ENCODE measurements at regions of chr5 and their contacts with region 1.

Region 1: DNA sequence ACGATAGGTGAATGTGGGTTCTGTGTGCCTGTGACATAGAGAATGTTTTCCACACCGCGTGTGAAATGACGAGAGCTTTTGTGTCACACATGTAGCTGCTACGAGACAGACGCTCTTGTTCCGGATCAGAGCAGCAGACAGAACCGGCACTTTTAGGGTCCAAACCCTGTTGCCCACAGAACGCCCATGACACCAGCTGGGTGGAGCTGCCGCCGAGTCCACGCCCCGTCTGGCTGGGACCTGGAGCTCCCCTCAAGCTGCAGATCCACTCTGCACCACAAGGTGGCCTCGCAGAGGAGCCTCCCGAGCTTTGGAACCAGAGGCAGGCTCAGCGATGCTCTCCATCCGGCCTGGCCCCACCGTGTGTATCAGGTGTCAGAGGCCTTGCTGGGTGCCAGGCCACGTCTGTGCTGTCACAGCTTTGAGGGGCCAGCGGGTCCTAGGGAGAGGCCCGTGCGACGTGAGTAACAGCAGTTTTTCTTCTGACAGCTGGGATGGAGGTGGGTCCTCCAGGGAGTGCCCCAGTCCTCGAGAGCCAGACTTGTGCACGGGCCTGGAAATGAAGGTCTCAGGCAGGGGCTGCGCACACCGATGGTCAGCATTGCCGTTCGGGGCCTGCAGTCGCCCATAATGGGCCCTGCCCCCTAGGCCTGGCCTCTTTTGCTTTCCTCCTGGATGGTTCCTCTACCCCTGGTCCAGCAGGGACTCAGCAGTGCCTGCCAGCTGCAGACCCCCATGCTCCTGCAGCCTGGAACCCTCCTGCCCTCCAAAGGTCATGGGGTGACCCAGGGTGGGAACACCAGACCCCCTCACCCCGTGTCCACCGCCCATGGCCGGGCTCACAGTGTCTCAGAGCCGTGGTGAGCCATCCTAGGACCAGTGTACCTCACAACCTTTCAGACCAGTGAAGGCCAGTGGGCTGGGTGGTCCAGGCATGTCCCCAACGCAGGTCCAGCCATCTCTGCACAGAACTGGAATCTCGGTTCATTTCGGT is 2.5 kb upstream of the LRRC14B start:
- DNase-seq: peak; percentile 80
- ATAC-seq: peak; percentile 99
- H3K4me3 Mint-ChIP-seq: no peak overlapping the region
- H3K27ac Mint-ChIP-seq: peak overlapping the region; percentile 12
- H3K4me1 Mint-ChIP-seq: peaks cover 11% of the 10 kb centered on the region
- H3K27me3 Mint-ChIP-seq: peaks cover 11% of the 10 kb centered on the region
- CTCF ChIP-seq: peak; percentile 65

Region 2: GRCh38 chr5:217860-218456 is 29.2 kb after region 1 on chr5 and contains the starts of genes CCDC127 and SDHA:
- CTCF ChIA-PET with region 1: interaction called, 13 read pairs
- POLR2A ChIA-PET with region 1: interaction called, 4 read pairs
- intact Hi-C with region 1: loop called (anchors 1 kb)
- DNase-seq: peak; percentile 99
- ATAC-seq: peak; percentile 81
- H3K4me3 Mint-ChIP-seq: peak within 1 kb of the TSS; percentile 91
- H3K27ac Mint-ChIP-seq: peak within 1 kb of the TSS; percentile 85
- H3K4me1 Mint-ChIP-seq: peaks cover 65% of the 10 kb centered on the region
- H3K27me3 Mint-ChIP-seq: no peaks in the 10 kb centered on the region
- CTCF ChIP-seq: no peak
- total RNA-seq, gene CCDC127: 5.7 and 6.4 TPM in 2 replicates
- total RNA-seq, gene SDHA: 90.5 and 95.7 TPM in 2 replicates

Region 3: GRCh38 chr5:424301-425110 is 235.7 kb after region 1 on chr5:
- CTCF ChIA-PET with region 1: interaction called, 12 read pairs
- POLR2A ChIA-PET with region 1: no interaction called
- intact Hi-C with region 1: no loop called
- DNase-seq: peak; percentile 17
- ATAC-seq: peak; percentile 80
- H3K4me3 Mint-ChIP-seq: no peak overlapping the region
- H3K27ac Mint-ChIP-seq: peak overlapping the region; percentile 37
- H3K4me1 Mint-ChIP-seq: peaks cover 16% of the 10 kb centered on the region
- H3K27me3 Mint-ChIP-seq: peaks cover 3% of the 10 kb centered on the region
- CTCF ChIP-seq: no peak

Region 4: GRCh38 chr5:458547-459353 is 270.0 kb after region 1 on chr5:
- CTCF ChIA-PET with region 1: no interaction called
- POLR2A ChIA-PET with region 1: no interaction called
- intact Hi-C with region 1: no loop called
- DNase-seq: no peak
- ATAC-seq: peak; percentile 64
- H3K4me3 Mint-ChIP-seq: no peak overlapping the region
- H3K27ac Mint-ChIP-seq: peak overlapping the region; percentile 62
- H3K4me1 Mint-ChIP-seq: peaks cover 20% of the 10 kb centered on the region
- H3K27me3 Mint-ChIP-seq: no peaks in the 10 kb centered on the region
- CTCF ChIP-seq: no peak

Region 5: DNA sequence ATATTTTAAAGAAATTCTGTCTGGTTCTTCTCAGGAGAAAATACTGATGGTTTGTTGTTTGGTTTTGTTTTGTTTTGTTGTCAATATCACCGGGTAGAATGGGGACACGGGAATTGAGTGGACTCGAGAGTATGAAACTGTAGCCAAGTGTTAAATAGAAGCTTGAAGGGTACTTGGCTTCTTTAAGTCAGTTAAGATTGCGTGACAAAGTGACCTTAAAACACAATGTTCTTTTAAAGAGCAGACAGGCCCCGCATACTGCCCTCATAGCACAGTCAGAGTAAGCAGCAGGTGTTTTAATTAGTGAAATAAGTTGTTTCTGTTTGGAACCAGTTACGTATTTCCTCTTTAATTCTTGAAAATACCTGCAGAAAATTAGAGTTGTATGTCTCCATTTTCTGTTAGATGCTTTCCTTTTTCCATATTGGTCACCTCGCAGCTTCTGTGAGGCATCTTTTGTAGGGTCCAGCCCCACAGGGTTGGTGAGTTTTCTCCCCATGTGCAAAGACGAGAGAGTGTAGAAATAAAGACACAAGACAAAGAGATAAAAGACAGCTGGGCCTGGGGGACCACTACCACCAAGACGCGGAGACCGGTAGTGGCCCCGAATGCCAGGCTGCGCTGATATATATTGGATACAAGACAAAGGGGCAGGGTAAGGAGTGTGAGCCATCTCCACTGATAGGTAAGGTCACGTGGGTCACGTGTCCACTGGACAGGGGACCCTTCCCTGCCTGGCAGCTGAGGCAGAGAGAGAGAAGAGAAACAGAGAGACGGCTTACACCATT is 713.5 kb after region 1 on chr5:
- CTCF ChIA-PET with region 1: interaction called, 13 read pairs
- POLR2A ChIA-PET with region 1: no interaction called
- intact Hi-C with region 1: loop called (anchors 2 kb)
- DNase-seq: no peak
- ATAC-seq: no peak
- H3K4me3 Mint-ChIP-seq: no peak overlapping the region
- H3K27ac Mint-ChIP-seq: no peak overlapping the region
- H3K4me1 Mint-ChIP-seq: no peaks in the 10 kb centered on the region
- H3K27me3 Mint-ChIP-seq: no peaks in the 10 kb centered on the region
- CTCF ChIP-seq: no peak